CD8-positive, alpha-beta T cell (primary cell): ENCODE measurements at regions of chr11 and their contacts with region 1.

Region 1: DNA sequence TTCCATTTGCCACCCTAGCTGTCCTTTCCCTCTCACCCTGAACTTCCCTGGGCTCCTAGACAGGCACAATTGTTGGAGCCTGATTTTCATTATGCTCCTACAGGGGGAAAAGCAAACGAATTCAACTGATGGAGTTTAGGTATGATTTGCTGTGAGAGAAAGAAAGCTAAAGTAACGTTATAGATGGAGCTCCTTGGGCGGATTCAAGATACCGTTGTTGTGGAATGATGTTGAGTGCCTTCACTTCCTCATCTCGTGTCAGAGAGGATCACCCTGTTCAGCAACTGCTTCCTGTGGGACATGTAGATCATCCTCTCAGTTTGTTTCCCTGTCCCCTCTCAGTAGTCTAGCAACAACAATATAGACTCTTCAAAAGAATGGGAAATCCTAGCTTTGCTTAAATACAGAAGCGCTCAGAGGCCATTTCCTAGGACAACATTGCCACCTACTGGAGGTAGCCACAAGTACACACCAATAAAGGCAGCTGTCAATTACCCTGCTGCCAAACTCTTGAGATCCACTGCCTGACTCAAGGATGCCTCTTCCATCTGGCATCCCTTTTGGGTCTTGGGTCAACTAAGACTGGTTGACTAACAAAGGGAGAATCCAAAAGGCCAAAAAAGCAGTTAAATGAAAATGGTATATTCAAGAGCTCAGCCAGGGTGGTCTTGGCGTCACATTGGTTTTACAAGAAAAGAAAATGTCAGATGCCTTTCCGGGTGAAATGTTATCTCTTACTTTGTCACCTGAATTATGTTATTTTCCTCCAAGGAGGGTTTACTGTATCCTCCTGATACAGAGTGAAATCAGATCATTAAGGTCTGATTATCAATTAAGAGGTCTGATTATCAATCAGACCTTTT is 13.5 kb upstream of the DTX4 start:
- DNase-seq: peak; percentile 31 to 85 (median 59)
- ATAC-seq: peak; percentile 99
- H3K4me3 ChIP-seq: no peak overlapping the region
- H3K4me3 Mint-ChIP-seq: no peak overlapping the region
- H3K27ac ChIP-seq: no peak overlapping the region
- H3K27ac Mint-ChIP-seq: no peak overlapping the region
- H3K4me1 ChIP-seq: no peaks in the 10 kb centered on the region
- H3K4me1 Mint-ChIP-seq: peaks cover 4% of the 10 kb centered on the region
- H3K27me3 ChIP-seq: no peaks in the 10 kb centered on the region
- H3K27me3 Mint-ChIP-seq: peaks cover 22% of the 10 kb centered on the region
- CTCF ChIP-seq: peak; percentile 77

Region 2: GRCh38 chr11:58654079-58654907 is 504.1 kb before region 1 on chr11:
- CTCF ChIA-PET with region 1: interaction called, 4 read pairs
- POLR2A ChIA-PET with region 1: no interaction called
- intact Hi-C with region 1: loop called (anchors 1 kb)
- DNase-seq: peak; percentile 53 to 85 (median 79)
- ATAC-seq: peak; percentile 98
- H3K4me3 ChIP-seq: no peak overlapping the region
- H3K4me3 Mint-ChIP-seq: no peak overlapping the region
- H3K27ac ChIP-seq: no peak overlapping the region
- H3K27ac Mint-ChIP-seq: no peak overlapping the region
- H3K4me1 ChIP-seq: no peaks in the 10 kb centered on the region
- H3K4me1 Mint-ChIP-seq: peaks cover 4% of the 10 kb centered on the region
- H3K27me3 ChIP-seq: no peaks in the 10 kb centered on the region
- H3K27me3 Mint-ChIP-seq: no peaks in the 10 kb centered on the region
- CTCF ChIP-seq: peak; percentile 82

Region 3: GRCh38 chr11:58866788-58867187 is 291.6 kb before region 1 on chr11:
- CTCF ChIA-PET with region 1: no interaction called
- POLR2A ChIA-PET with region 1: no interaction called
- intact Hi-C with region 1: no loop called
- DNase-seq: no peak
- ATAC-seq: no peak
- H3K4me3 ChIP-seq: no peak overlapping the region
- H3K4me3 Mint-ChIP-seq: no peak overlapping the region
- H3K27ac ChIP-seq: no peak overlapping the region
- H3K27ac Mint-ChIP-seq: no peak overlapping the region
- H3K4me1 ChIP-seq: no peaks in the 10 kb centered on the region
- H3K4me1 Mint-ChIP-seq: no peaks in the 10 kb centered on the region
- H3K27me3 ChIP-seq: no peaks in the 10 kb centered on the region
- H3K27me3 Mint-ChIP-seq: peaks cover 11% of the 10 kb centered on the region
- CTCF ChIP-seq: no peak

Region 4: GRCh38 chr11:59053387-59053786 is 105.0 kb before region 1 on chr11:
- CTCF ChIA-PET with region 1: interaction called, 75 read pairs
- POLR2A ChIA-PET with region 1: no interaction called
- intact Hi-C with region 1: loop called (anchors 1 kb)
- DNase-seq: peak; percentile 56 to 84 (median 80)
- ATAC-seq: peak; percentile 73
- H3K4me3 ChIP-seq: no peak overlapping the region
- H3K4me3 Mint-ChIP-seq: no peak overlapping the region
- H3K27ac ChIP-seq: no peak overlapping the region
- H3K27ac Mint-ChIP-seq: no peak overlapping the region
- H3K4me1 ChIP-seq: no peaks in the 10 kb centered on the region
- H3K4me1 Mint-ChIP-seq: peaks cover 6% of the 10 kb centered on the region
- H3K27me3 ChIP-seq: no peaks in the 10 kb centered on the region
- H3K27me3 Mint-ChIP-seq: peaks cover 15% of the 10 kb centered on the region
- CTCF ChIP-seq: peak; percentile 73

Region 5: DNA sequence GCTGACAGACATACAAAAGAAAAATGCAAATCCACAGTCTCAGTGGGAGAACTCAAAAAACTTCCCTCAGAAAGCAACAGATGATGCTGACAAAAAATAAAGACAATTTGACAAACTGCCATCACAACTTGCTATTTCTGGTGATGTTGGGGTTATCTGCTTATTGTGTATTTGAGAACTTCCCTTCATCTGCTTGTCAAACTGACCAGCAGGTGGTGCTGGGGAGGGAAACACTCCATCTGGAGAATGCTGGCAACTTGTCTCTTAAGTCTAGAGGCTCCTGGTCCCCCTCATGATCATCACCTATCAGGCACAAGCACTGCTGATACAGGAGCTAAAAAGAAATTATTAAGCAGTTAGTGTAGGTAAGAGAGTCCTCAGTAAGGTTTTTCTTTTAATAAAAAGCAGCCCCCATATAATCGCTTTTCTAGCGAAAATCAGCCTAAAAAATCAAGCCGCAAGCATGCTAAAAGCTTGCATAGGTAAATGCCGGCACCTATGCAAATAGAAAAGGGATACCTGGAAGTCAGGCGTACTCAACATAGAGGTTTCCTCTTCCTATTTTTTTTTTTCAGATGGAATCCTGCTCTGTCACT is 61.2 kb before region 1 on chr11:
- CTCF ChIA-PET with region 1: interaction called, 48 read pairs
- POLR2A ChIA-PET with region 1: interaction called, 3 read pairs
- intact Hi-C with region 1: loop called (anchors 1 kb)
- DNase-seq: peak; percentile 44 to 81 (median 67)
- ATAC-seq: peak; percentile 79
- H3K4me3 ChIP-seq: no peak overlapping the region
- H3K4me3 Mint-ChIP-seq: no peak overlapping the region
- H3K27ac ChIP-seq: no peak overlapping the region
- H3K27ac Mint-ChIP-seq: no peak overlapping the region
- H3K4me1 ChIP-seq: peaks cover 3% of the 10 kb centered on the region
- H3K4me1 Mint-ChIP-seq: peaks cover 7% of the 10 kb centered on the region
- H3K27me3 ChIP-seq: peaks cover 2 to 4% of the 10 kb centered on the region in 2 experiments
- H3K27me3 Mint-ChIP-seq: peaks cover 30% of the 10 kb centered on the region
- CTCF ChIP-seq: peak; percentile 72

Region 6: GRCh38 chr11:59115553-59115952 is 42.9 kb before region 1 on chr11:
- CTCF ChIA-PET with region 1: no interaction called
- POLR2A ChIA-PET with region 1: no interaction called
- intact Hi-C with region 1: no loop called
- DNase-seq: no peak
- ATAC-seq: no peak
- H3K4me3 ChIP-seq: no peak overlapping the region
- H3K4me3 Mint-ChIP-seq: no peak overlapping the region
- H3K27ac ChIP-seq: no peak overlapping the region
- H3K27ac Mint-ChIP-seq: no peak overlapping the region
- H3K4me1 ChIP-seq: no peaks in the 10 kb centered on the region
- H3K4me1 Mint-ChIP-seq: no peaks in the 10 kb centered on the region
- H3K27me3 ChIP-seq: no peaks in the 10 kb centered on the region
- H3K27me3 Mint-ChIP-seq: peaks cover 2% of the 10 kb centered on the region
- CTCF ChIP-seq: no peak

Region 7: DNA sequence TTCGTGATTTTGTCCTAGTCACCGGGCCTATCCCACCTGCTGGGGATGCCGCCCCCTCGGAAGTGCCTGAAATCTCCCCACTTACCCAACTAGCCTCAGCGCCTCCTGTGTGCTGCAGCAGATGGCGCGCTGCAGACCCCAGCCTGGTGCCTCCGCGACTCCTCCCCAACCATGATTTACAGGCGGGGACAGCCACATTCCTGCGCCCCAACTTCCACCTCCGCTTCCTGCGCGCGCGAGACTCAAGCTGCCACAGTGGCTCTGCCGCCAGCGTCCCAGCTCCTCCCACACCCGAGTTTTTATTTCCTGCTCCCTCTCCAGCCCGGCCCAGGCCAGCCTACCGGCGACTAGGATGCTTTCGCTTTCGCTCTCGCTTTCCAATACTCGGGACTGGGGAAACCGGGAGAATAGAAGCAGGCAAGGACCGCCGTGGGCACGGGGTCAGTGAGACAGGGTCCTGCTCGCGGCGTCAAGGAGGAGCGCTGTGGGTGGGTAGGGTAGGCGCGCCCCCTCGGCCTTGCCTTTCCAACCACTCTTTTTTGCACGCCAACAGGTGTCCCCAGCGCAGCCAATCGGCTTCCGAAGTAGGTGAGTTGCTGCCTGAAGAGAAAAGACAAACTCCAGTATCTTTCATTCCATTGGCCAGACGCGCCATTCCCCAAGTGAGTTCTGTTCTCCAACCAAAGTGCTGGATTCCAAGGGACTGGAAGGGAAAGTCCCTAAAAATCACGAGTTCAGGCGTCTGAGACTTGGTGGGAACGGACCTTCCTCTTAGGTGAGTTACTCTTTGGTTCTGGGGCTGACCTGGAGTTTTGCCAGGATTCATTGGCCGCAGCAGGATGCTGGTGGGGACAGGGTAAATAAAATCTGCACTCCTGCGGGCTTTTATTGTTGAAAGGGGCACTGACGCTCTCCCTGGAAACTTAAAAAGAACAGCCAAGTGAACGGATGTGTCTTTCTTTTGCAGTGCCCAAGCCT is 15.6 kb before region 1 on chr11 and contains the start of gene FAM111A:
- CTCF ChIA-PET with region 1: interaction called, 73 read pairs
- POLR2A ChIA-PET with region 1: interaction called, 10 read pairs
- intact Hi-C with region 1: loop called (anchors 1 to 2 kb)
- DNase-seq: peak; percentile 58 to 95 (median 87)
- ATAC-seq: peak; percentile 83
- H3K4me3 ChIP-seq: peak within 1 kb of the TSS; percentile 84 to 95
- H3K4me3 Mint-ChIP-seq: peak within 1 kb of the TSS; percentile 98
- H3K27ac ChIP-seq: peak within 1 kb of the TSS; percentile 81 to 95
- H3K27ac Mint-ChIP-seq: peak within 1 kb of the TSS; percentile 97
- H3K4me1 ChIP-seq: peaks cover 31% of the 10 kb centered on the region
- H3K4me1 Mint-ChIP-seq: peaks cover 54% of the 10 kb centered on the region
- H3K27me3 ChIP-seq: no peaks in the 10 kb centered on the region
- H3K27me3 Mint-ChIP-seq: no peaks in the 10 kb centered on the region
- CTCF ChIP-seq: peak; percentile 45
- total RNA-seq, gene FAM111A: 23.3 to 33.4 TPM